Activated CD8-positive, alpha-beta T cell treated with anti-CD3 and anti-CD28 coated beads for 36 hours (primary cell): ENCODE measurements at regions of chr20 and their contacts with region 1.

Region 1: GRCh38 chr20:17995967-17996819 is 27.4 kb downstream of the MGME1 start:
- DNase-seq: peak; percentile 54
- ATAC-seq: peak; percentile 72
- H3K4me3 Mint-ChIP-seq: no peak overlapping the region
- H3K27ac Mint-ChIP-seq: no peak overlapping the region
- H3K4me1 Mint-ChIP-seq: peaks cover 27% of the 10 kb centered on the region
- H3K27me3 Mint-ChIP-seq: peaks cover 22% of the 10 kb centered on the region
- CTCF ChIP-seq: peak; percentile 94

Region 2: DNA sequence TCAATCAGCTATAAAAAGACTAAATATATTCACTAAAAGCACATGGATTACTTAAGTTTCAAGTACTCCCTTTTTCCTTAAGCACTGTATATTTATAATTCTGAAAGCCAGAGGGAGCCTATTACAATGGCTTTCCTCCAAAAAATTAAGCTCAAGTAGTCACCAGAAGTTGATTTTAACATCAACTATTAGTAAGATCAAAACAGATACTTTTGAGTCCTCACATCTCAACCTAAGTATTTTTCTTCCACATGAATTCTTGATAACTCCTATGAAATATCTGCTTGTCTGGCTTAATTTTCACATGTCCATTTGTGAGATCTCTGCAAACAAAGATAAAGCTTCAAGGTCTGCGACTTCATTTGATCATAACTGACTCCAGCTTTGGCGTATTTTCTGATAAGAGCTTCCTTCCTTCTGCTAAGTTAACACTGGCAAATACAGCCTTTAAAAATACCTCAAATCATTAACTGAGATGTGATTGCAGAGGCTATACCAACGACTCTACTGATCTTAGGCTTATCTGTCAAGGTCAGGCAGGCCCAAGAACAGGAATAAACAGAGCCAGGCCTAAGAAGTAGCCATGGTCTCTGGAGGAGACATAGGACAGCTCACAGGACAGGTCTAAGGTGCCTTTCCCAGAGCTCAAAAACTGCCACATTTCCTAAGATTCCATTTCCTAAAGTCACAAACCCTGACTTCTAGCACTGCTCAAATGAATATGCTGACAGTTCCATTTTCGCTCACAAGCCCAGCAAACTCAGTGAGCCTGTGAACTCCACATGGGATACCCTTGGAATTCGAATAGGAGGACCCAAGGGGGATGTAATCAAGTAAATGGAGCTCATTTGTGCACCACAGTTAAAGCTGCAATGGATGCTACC is 37.6 kb before region 1 on chr20:
- CTCF ChIA-PET with region 1: interaction called, 14 read pairs
- POLR2A ChIA-PET with region 1: interaction called, 5 read pairs
- intact Hi-C with region 1: no loop called
- DNase-seq: no peak
- ATAC-seq: no peak
- H3K4me3 Mint-ChIP-seq: no peak overlapping the region
- H3K27ac Mint-ChIP-seq: peak overlapping the region; percentile 56
- H3K4me1 Mint-ChIP-seq: peaks cover 73% of the 10 kb centered on the region
- H3K27me3 Mint-ChIP-seq: no peaks in the 10 kb centered on the region
- CTCF ChIP-seq: no peak

Region 3: DNA sequence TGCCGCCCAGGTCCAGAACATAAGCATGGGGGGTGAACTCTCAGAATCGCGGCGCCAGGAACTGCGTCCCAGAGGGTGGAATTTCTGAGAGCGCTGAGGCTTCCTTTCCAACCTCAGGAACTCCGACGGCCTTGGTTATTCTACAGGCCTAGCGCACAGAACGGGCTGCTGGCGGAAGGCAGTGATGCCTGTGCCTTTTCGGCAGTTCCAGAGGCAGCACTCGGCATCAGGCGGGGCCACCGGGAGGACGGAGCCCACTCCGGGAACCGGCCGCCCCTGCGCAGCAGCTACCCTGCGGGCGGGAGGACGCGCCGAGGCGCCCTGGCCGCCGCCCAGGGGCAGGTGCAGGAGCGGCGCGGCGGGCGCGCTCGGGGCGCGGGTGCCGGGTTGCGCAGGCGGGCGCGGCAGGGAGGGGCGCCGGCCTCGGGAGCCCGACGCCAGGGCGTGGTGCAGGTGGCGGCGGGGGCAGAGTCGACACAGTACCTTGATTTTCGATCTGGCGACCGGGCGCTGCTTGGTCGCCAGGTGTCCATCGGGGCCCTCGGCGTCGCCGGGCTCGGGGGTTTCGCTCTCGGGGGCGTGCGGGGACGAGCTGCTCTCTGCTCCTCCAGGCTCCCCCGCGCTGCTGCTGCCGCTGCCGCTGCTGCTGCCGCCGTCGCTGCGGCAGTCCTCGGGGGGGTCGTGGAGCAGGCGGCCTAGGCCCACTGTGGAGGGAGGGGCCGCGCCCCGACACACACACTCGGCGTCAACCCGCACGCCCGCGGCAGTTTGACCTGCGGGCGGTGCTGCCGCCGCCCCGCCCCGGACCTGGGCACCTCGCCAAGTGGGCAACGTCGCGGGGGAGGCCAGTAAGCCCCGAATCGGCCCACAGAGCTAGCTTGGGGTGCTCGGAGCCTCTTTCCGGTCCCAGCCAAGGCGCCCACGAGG is 60.2 kb after region 1 on chr20:
- CTCF ChIA-PET with region 1: no interaction called
- POLR2A ChIA-PET with region 1: no interaction called
- intact Hi-C with region 1: no loop called
- DNase-seq: peak; percentile 11
- ATAC-seq: peak; percentile 66
- H3K4me3 Mint-ChIP-seq: peak overlapping the region; percentile 33
- H3K27ac Mint-ChIP-seq: no peak overlapping the region
- H3K4me1 Mint-ChIP-seq: peaks cover 6% of the 10 kb centered on the region
- H3K27me3 Mint-ChIP-seq: peaks cover 62% of the 10 kb centered on the region
- CTCF ChIP-seq: no peak

Region 4: DNA sequence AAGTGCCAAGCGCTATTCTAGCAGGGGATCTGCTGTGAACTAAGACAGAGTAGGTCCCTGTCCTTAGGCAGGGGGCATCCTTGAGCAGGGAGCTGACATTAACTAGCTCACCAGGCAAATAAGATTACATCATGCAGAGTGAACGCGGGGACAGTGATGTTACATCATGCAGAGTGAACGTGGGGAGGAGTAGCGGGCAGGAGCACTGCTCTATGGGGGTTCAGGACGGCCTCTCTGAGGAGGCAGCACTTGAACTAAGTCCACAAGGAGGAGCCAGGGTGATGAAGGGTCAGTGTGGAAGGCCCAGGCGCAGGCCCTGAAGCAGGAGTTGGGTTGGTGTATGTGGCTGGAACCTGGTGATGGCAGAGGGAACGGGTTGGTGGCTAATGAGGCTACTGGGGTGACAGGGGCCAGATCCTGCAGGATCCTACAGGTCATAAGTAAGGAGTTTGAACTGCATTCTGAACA is 180.2 kb after region 1 on chr20:
- CTCF ChIA-PET with region 1: no interaction called
- POLR2A ChIA-PET with region 1: no interaction called
- intact Hi-C with region 1: no loop called
- DNase-seq: no peak
- ATAC-seq: no peak
- H3K4me3 Mint-ChIP-seq: no peak overlapping the region
- H3K27ac Mint-ChIP-seq: peak overlapping the region; percentile 1
- H3K4me1 Mint-ChIP-seq: peaks cover 14% of the 10 kb centered on the region
- H3K27me3 Mint-ChIP-seq: no peaks in the 10 kb centered on the region
- CTCF ChIP-seq: no peak